ENCODE measurements at regions of chrX and their contacts with region 1.

Region 1: DNA sequence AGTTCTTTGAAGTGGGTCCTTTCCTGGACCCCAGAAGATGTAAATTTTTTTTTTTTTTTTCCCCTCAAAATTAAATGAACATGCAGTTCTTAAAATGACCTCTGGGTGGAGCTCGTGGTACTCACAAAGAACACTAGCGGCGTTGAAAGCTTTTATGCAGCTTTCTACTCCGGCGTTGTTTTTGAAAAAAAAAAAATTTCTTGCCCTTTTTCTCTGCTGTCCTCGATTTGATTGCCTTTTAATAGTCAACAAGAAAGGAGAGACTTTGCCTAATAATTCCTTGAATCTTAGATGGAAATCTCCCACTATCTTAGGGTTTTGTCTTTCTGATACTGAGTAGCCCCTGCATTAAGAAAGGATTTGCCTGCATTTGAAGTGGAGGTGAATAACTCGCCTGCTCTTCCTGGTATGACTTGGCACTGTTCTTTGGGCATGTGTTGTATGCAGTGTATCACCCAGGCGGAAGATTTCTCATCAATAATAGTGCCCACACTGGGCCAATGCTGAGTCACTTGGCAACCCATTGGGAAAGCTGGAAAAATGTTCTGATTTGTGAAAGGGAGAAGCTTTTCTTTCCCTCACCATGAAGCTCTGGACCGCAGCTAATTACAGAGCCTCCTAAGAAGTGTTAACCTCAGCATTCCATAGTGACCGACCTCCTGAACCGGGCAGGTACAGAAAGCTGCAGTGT is 104.0 kb downstream of the PHEX start:
- DNase-seq: no peak
- ATAC-seq: peak; percentile 29 to 51
- H3K4me3 ChIP-seq: no peak overlapping the region
- H3K27ac ChIP-seq: peak overlapping the region; percentile 19
- H3K4me1 ChIP-seq: no peaks in the 10 kb centered on the region
- H3K27me3 ChIP-seq: no peaks in the 10 kb centered on the region

Region 2: GRCh38 chrX:21711129-21711847 is 424.9 kb before region 1 on chrX:
- intact Hi-C with region 1: no loop called
- DNase-seq: peak in 1 of 3 donors; percentile 61
- ATAC-seq: peak; percentile 79 to 91
- H3K4me3 ChIP-seq: no peak overlapping the region
- H3K27ac ChIP-seq: peak overlapping the region; percentile 86
- H3K4me1 ChIP-seq: no peaks in the 10 kb centered on the region
- H3K27me3 ChIP-seq: no peaks in the 10 kb centered on the region

Region 3: DNA sequence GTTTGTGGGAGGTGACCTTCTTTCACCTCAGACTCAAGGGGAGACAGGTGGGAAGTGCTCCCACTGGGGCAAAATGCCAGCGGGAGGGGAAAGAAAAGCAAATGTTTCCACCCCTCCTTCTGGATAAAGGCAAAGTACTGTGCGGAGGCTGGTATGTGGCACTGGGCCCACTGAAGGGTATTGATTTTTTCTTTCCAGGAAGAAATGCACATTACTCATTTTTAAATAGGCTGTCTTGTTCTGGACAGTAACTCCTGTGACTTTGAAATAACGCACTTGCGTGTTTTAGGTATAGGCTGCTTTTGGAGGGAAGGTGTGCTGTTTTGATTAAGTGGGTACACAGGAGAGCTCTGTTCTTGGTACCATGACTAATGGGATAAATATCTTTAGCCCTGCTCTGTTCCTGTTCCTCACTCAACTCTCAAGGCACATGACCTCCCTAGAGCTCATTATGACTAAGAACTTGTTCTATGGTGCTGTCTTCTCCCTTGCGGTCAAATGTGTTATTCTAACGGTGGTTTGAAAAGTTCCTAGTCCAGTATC is 337.4 kb before region 1 on chrX:
- intact Hi-C with region 1: no loop called
- DNase-seq: no peak
- ATAC-seq: peak in 1 of 2 donors; percentile 40
- H3K4me3 ChIP-seq: no peak overlapping the region
- H3K27ac ChIP-seq: peak overlapping the region; percentile 17
- H3K4me1 ChIP-seq: peaks cover 4% of the 10 kb centered on the region
- H3K27me3 ChIP-seq: no peaks in the 10 kb centered on the region

Region 4: GRCh38 chrX:22192417-22193060 is 56.4 kb after region 1 on chrX:
- intact Hi-C with region 1: loop called in 1 of 4 experiments (anchors 10 kb)
- DNase-seq: peak; percentile 54 to 80 (median 78)
- ATAC-seq: peak; percentile 77 to 79
- H3K4me3 ChIP-seq: no peak overlapping the region
- H3K27ac ChIP-seq: no peak overlapping the region
- H3K4me1 ChIP-seq: no peaks in the 10 kb centered on the region
- H3K27me3 ChIP-seq: no peaks in the 10 kb centered on the region

Region 5: GRCh38 chrX:22748093-22748999 is 612.2 kb after region 1 on chrX:
- intact Hi-C with region 1: loop called in 1 of 4 experiments (anchors 5 kb)
- DNase-seq: peak in 2 of 3 donors; percentile 17 to 37
- ATAC-seq: peak; percentile 58 to 60
- H3K4me3 ChIP-seq: no peak overlapping the region
- H3K27ac ChIP-seq: no peak overlapping the region
- H3K4me1 ChIP-seq: no peaks in the 10 kb centered on the region
- H3K27me3 ChIP-seq: no peaks in the 10 kb centered on the region